GM13977 (cell line): ENCODE measurements at regions of chr1 and their contacts with region 1.

Region 1: DNA sequence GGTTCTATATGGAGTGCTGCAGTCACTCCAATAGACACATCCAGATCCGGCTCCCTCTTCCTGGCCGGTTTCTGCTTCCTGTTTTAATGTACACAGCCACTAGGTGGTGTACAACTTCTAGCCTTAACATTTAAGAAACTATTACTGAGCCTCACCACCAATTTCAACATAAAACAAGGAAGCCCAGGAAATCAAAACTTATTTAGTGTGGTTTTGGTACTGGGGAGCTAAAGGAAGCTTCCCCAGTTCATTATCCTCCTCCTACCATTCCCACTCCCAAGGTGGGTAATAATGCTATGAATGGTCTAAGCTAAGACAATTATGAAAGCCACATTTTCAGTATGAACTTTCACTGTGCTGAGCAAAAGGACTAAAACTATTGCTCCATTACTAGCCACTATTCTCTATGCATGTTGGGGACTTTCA is 25.5 kb upstream of the MTMR11 start:
- DNase-seq: peak; percentile 59
- CTCF ChIP-seq: peak; percentile 80

Region 2: GRCh38 chr1:149915429-149916192 is 46.5 kb before region 1 on chr1:
- in situ Hi-C with region 1: no loop called
- DNase-seq: no peak
- CTCF ChIP-seq: no peak

Region 3: GRCh38 chr1:150021191-150021694 is 59.1 kb after region 1 on chr1:
- in situ Hi-C with region 1: no loop called
- DNase-seq: no peak
- CTCF ChIP-seq: no peak

Region 4: DNA sequence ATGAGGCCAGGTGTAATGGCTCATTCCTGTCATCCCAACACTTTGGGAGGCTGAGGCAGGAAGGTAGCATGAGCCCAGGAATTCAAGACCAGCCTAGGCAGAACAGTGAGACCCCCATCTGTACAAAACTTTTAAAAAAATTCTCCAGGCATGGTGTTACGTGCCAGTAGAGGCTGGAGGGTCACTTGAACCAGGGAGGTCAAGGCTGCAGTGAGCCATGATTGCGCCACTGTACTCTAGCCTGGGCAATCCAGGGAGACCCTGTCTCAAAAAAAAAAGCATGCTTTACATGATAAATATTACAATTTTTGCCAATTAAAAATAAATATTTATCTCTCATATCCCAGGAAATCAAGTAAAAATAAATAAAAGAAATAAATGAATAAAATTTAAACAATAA is 87.8 kb after region 1 on chr1:
- in situ Hi-C with region 1: loop called (anchors 10 kb)
- DNase-seq: no peak
- CTCF ChIP-seq: no peak

Region 5: DNA sequence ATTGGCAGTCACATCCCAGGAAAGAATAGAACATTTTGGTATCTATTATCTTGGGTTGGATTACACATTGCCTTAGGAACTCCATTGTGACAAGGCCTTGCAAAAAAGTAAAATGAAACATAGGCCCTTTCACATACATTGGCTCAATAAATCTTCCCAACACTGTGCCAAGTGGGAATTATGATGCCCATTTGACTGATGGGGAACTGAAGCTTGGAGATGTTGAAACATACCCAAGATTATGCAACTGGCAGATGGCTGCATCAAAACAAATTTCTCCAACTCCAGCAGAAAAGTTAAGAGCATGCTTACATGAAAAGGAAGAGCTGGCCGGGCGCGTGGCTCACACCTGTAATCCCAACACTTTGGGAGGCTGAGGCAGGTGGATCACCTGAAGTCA is 214.5 kb after region 1 on chr1:
- in situ Hi-C with region 1: loop called (anchors 10 kb)
- DNase-seq: no peak
- CTCF ChIP-seq: no peak

Region 6: DNA sequence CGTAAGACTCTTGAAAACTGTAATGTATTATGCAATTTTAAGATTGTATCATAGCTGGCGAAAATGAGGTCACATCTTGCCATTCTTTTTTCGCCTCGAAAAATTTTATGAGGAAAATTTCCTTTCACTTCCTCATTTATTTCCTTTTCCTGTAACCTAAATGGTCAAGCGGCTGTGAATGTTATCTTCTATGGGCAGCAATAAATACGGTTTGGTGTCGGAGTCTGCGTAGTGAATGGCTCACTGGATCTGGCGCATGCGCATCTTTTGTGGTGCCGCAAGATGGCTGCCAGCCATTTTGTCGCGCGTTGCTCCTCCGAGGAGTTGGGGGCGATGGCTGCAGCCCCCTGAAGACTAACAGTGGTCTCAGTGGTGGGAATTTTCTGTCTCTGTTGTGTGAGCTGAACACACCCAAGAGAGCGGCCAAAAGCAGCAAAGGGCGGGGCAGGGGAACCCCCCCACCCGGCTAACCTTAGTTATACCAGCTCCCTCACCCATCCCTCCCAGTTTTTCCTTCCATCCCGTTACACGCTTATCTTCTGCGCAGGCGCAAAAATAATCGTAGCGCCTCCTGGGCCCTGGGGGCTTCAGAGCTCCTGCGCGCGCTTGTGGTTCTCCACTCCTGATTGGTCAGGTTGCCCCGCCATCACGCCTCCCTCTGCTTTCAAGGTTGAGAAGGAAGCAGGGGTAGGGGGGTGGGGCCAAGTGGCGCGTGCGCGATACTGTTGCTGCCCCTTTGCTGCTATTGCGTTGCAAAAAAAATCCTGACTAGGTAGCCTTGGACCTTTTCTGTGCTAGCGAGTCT is 401.5 kb after region 1 on chr1 and contains the start of gene RPRD2:
- in situ Hi-C with region 1: no loop called
- DNase-seq: peak; percentile 97
- CTCF ChIP-seq: no peak

Region 7: GRCh38 chr1:150772326-150772725 is 810.2 kb after region 1 on chr1:
- in situ Hi-C with region 1: no loop called
- DNase-seq: no peak
- CTCF ChIP-seq: no peak